Activated B cell treated with CpG ODN at 0.5 μM for 24 hours (primary cell): ENCODE measurements at regions of chr3 and their contacts with region 1.

Region 1: DNA sequence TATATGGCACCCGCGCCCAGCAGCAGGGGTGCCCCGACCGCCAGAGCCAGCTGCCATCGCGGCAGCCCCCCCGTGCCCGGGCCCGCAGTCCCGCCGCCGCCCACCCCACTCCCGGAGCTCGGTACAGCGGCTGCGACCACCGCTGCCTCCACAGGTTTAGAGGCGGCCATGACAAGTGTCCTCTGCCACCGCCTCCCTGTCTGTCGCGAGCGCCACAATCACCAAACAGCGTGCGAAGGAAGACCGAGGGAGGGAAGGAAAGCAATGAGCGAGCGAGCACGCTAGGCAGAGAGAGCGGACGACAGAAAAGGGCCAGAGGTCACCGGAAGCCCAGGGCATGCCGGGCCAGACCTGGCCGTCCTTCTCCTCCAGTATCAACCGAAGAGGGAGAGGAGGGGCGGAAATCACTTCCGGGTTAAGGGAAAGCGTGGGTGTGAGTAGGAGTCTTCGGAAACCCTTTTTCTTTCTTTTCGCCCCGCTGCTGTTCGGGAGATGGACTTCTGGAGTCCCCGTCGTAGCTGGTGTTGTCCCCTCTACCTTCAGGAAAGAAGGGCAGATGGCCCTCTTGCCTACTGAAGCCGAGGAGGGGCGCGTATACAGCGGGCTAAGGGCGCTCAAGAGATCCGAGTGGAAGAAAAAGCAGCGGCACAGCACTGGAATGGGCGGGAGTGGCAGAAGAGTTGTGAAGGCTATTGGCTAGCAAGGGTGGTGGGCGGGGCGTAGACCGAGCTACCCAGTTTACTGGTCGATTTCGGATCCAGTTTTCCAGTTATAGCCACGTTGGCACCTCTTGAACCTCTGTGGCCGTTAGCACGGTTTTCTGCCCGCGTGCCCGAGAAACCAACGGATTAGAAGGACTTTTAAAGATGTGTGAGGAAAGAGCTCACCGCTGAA is at the starts of genes LNP1 and TOMM70:
- DNase-seq: peak; percentile 86
- ATAC-seq: peak; percentile 92
- H3K4me3 Mint-ChIP-seq: peak within 1 kb of the TSS; percentile 96
- H3K27ac Mint-ChIP-seq: peak within 1 kb of the TSS; percentile 95
- H3K4me1 Mint-ChIP-seq: peaks cover 58% of the 10 kb centered on the region
- H3K27me3 Mint-ChIP-seq: no peaks in the 10 kb centered on the region
- CTCF ChIP-seq: no peak
- total RNA-seq, gene LNP1: 1.7 and 2.4 TPM in 2 replicates
- total RNA-seq, gene TOMM70: 34.5 and 37.3 TPM in 2 replicates

Region 2: GRCh38 chr3:98522244-98523090 is 1878.6 kb before region 1 on chr3 and contains the start of gene CLDND1:
- CTCF ChIA-PET with region 1: no interaction called
- POLR2A ChIA-PET with region 1: no interaction called
- intact Hi-C with region 1: loop called (anchors 2 kb)
- DNase-seq: peak; percentile 92
- ATAC-seq: peak; percentile 97
- H3K4me3 Mint-ChIP-seq: peak within 1 kb of the TSS; percentile 92
- H3K27ac Mint-ChIP-seq: peak within 1 kb of the TSS; percentile 87
- H3K4me1 Mint-ChIP-seq: peaks cover 40% of the 10 kb centered on the region
- H3K27me3 Mint-ChIP-seq: no peaks in the 10 kb centered on the region
- CTCF ChIP-seq: no peak
- total RNA-seq, gene CLDND1: 133 and 140 TPM in 2 replicates

Region 3: DNA sequence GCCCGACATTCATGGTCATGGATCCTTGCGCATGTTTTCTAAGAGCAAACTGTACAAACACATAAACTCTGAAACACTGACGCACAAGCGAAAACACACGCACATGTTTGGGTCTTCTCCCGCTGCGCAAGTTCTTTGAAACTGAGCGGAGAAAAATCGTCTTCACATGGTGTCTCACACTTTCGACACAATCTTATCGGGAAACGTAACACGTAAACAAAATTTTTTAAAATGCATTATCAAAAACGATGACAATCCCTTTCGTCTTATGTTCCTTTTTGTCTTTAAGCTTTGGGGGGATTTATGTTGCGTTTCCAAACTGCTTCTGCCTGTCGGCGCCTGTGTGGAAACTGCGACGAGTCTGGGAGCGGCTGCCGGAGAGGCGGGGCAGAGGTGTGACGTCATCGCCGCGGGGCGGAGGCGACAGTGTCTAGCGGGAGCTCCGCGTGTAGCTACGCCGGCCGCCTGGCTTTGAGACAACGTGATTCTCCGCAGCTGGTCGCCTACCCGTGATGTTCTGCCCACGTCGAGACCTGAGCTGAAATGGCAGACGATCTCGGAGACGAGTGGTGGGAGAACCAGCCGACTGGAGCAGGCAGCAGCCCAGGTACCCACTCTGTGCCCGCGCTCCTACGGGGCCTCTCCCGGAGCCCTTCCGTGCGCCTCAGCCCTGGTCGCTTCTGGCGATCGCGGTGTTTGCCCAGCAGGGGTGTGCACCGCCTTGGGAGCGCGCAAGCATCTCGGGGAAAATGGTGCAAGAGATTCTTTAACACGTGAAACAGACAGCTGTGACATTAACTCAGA is 583.4 kb before region 1 on chr3 and contains the start of gene CMSS1:
- CTCF ChIA-PET with region 1: no interaction called
- POLR2A ChIA-PET with region 1: interaction called, 8 read pairs
- intact Hi-C with region 1: loop called (anchors 1 kb)
- DNase-seq: peak; percentile 96
- ATAC-seq: peak; percentile 94
- H3K4me3 Mint-ChIP-seq: peak within 1 kb of the TSS; percentile 97
- H3K27ac Mint-ChIP-seq: peak within 1 kb of the TSS; percentile 99
- H3K4me1 Mint-ChIP-seq: peaks cover 37% of the 10 kb centered on the region
- H3K27me3 Mint-ChIP-seq: no peaks in the 10 kb centered on the region
- CTCF ChIP-seq: no peak
- total RNA-seq, gene CMSS1: 37.4 and 41.1 TPM in 2 replicates

Region 4: GRCh38 chr3:100260685-100261484 is 140.1 kb before region 1 on chr3 and contains the start of gene TBC1D23:
- CTCF ChIA-PET with region 1: no interaction called
- POLR2A ChIA-PET with region 1: interaction called, 14 read pairs
- intact Hi-C with region 1: loop called (anchors 1 kb)
- DNase-seq: peak; percentile 93
- ATAC-seq: peak; percentile 100
- H3K4me3 Mint-ChIP-seq: peak within 1 kb of the TSS; percentile 93
- H3K27ac Mint-ChIP-seq: peak within 1 kb of the TSS; percentile 96
- H3K4me1 Mint-ChIP-seq: peaks cover 43% of the 10 kb centered on the region
- H3K27me3 Mint-ChIP-seq: no peaks in the 10 kb centered on the region
- CTCF ChIP-seq: no peak
- total RNA-seq, gene TBC1D23: 27.2 and 27.7 TPM in 2 replicates

Region 5: DNA sequence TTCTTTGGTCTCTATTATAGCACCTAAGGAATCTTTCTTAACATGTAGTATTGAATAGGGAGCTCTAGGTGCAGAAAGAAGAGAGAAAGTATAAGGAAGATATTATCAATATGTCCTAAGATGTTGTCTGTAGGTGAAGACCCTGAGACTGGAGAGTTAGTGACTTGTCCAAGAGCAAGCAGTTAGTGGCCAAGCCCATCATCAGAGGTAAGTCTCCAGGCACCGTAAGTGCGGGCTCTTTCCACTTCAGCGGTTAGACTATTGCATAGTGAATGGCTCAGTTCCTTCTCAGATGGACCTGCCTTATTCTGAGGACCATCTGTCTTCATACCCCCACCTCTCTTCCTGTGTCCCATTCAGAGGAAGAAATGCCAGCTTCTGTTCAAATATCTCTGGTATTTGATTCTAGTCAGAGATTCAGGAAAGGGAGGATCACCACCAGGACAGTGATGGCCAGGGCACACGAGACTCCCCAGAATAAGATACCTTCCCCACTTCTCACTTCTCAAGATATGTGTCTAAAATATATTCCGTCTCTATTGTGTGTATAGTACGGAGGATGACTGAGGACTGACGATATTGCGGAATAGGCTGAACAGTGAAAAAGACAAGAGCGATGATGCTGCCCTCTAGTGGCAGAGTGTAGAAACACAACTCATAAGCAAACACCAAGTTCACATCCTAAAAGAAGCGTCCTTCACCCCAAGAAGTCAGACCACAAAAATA is 189.2 kb after region 1 on chr3:
- CTCF ChIA-PET with region 1: interaction called, 6 read pairs
- POLR2A ChIA-PET with region 1: interaction called, 4 read pairs
- intact Hi-C with region 1: loop called (anchors 5 kb)
- DNase-seq: no peak
- ATAC-seq: peak; percentile 92
- H3K4me3 Mint-ChIP-seq: no peak overlapping the region
- H3K27ac Mint-ChIP-seq: no peak overlapping the region
- H3K4me1 Mint-ChIP-seq: peaks cover 4% of the 10 kb centered on the region
- H3K27me3 Mint-ChIP-seq: peaks cover 2% of the 10 kb centered on the region
- CTCF ChIP-seq: peak; percentile 77

Region 6: DNA sequence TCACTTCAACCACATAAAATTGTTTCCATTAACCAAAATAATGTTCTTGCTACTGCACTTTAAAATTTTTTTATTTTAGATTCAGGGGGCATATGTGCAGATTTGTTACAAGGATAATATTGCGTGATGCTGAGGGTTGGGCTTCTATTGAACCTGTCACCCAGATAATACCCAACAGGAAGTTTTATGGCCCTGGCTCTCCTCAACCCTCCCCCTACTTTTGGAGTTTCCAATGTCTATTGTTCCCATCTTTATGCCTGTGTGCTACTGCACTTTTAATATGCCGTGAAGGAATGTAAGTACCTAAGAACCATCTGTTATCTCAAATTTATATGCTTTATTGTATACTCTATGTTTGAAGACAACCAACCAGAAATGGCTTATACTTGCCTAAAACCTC is 961.4 kb after region 1 on chr3:
- CTCF ChIA-PET with region 1: no interaction called
- POLR2A ChIA-PET with region 1: no interaction called
- intact Hi-C with region 1: no loop called
- DNase-seq: no peak
- ATAC-seq: no peak
- H3K4me3 Mint-ChIP-seq: no peak overlapping the region
- H3K27ac Mint-ChIP-seq: no peak overlapping the region
- H3K4me1 Mint-ChIP-seq: no peaks in the 10 kb centered on the region
- H3K27me3 Mint-ChIP-seq: no peaks in the 10 kb centered on the region
- CTCF ChIP-seq: no peak

Region 7: DNA sequence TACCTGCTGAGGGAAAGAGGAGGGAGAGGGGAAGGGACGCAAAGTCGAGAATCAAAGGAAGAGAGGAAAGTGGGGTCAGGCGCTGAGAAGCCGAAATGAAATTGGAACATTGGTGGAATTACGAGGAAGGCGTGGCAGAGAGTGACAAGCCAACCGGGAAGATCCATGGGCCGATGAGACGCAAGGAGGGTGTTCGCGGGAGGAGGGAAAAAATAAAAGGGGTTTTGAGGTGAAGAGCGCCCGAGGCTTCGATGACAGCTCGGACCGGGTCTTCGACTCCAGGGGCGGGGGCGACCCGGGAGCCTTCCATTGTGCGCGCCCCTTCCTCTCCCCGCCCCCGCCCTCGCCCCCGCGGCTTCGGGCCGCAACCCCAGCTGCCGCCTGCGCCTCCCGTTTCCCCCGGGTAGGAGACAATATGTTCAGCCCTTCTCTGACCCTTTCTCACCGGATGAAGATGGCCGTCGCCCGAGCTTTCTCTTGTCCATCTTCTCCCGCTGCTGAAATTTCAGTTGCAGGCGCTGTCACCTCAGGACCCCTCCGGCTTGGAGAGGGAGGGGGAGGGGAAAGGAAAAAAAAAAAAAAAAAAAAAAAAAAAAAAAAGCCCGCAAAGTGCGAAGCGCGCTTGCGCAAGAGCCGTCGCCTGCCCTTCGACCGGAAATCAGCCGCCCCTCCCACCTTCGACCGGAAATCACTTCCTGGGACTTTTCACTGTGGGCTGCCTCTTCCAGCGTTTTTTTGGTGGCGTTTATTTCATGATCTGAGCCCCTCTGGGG is 1111.8 kb after region 1 on chr3 and contains the start of gene SENP7:
- CTCF ChIA-PET with region 1: no interaction called
- POLR2A ChIA-PET with region 1: interaction called, 3 read pairs
- intact Hi-C with region 1: loop called (anchors 2 kb)
- DNase-seq: peak; percentile 74
- ATAC-seq: peak; percentile 72
- H3K4me3 Mint-ChIP-seq: peak within 1 kb of the TSS; percentile 98
- H3K27ac Mint-ChIP-seq: peak within 1 kb of the TSS; percentile 99
- H3K4me1 Mint-ChIP-seq: peaks cover 35% of the 10 kb centered on the region
- H3K27me3 Mint-ChIP-seq: no peaks in the 10 kb centered on the region
- CTCF ChIP-seq: no peak
- total RNA-seq, gene SENP7: 18.6 and 22.1 TPM in 2 replicates